Dendritic cell treated with granulocyte-macrophage colony-stimulating factor and Interleukin-4, amounts not matched to agents 40 ng/mL and 50 ng/mL, for 4 days (primary cell): ENCODE measurements at regions of chr19 and their contacts with region 1.

Region 1: GRCh38 chr19:37779127-37780005 is at the start of gene ZNF573:
- H3K4me3 Mint-ChIP-seq: peak within 1 kb of the TSS; percentile 90
- H3K27ac Mint-ChIP-seq: peak within 1 kb of the TSS; percentile 93
- H3K4me1 Mint-ChIP-seq: peaks cover 23% of the 10 kb centered on the region
- H3K27me3 Mint-ChIP-seq: no peaks in the 10 kb centered on the region

Region 2: GRCh38 chr19:36214386-36215275 is 1564.7 kb before region 1 on chr19 and contains the starts of genes ZNF146 and ZNF565:
- intact Hi-C with region 1: loop called (anchors 10 kb)
- H3K4me3 Mint-ChIP-seq: no peak within 1 kb of the TSS
- H3K27ac Mint-ChIP-seq: no peak within 1 kb of the TSS
- H3K4me1 Mint-ChIP-seq: peaks cover 7% of the 10 kb centered on the region
- H3K27me3 Mint-ChIP-seq: no peaks in the 10 kb centered on the region

Region 3: DNA sequence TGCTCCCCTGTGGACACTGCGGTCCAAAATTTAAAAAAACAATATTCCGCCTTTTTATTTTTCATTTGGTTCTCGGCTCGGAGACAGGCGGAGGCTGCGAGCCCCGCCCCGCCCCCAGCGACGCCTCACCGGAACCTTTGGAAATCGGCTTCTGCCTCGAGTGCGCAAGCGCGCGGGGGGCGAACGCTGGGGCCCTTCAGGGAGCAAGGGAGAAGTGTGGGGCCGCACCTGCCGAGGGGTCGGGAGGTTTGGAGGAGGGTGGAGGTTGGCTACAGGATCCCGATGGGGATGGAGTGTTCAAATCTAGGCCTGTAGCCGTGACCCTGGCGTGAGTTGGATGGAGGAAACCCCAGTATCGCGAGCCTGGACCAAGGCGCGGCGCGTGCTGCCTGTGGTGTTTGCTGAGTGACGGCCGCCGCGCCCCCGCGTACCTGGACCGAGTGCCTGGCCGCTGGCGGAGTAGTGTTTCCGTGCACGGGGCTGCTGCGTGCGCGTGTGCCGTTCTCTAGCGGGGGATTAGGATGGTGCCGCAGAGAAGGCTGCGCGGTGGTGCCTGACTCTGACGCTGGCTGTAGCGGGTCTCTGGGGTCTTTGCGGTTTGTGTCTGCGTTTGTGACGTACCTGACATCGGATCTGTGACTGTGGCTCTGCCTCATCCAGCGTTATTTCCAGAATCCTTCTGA is 123.5 kb before region 1 on chr19:
- intact Hi-C with region 1: loop called (anchors 10 kb)
- H3K4me3 Mint-ChIP-seq: peak overlapping the region; percentile 90
- H3K27ac Mint-ChIP-seq: peak overlapping the region; percentile 85
- H3K4me1 Mint-ChIP-seq: peaks cover 22% of the 10 kb centered on the region
- H3K27me3 Mint-ChIP-seq: peaks cover 5% of the 10 kb centered on the region

Region 4: DNA sequence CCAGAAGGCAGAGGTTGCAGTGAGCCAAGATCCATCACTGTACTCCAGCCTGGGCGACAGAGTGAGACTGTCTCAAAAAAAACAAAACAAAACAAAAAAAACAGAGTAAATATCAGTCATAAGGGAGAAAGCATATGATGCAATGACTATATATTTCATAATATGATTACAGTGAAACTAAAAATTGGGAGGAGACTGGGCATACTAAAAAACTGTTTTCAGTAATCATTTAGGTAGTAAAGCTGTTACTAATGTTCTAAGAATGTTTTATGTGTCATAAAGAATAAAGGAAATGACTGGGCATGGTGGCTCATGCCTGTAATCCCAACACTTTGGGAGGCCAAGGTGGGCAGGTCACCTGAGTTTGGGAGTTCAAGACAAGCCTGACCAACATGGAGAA is 15.9 kb before region 1 on chr19:
- intact Hi-C with region 1: no loop called
- H3K4me3 Mint-ChIP-seq: no peak overlapping the region
- H3K27ac Mint-ChIP-seq: no peak overlapping the region
- H3K4me1 Mint-ChIP-seq: no peaks in the 10 kb centered on the region
- H3K27me3 Mint-ChIP-seq: no peaks in the 10 kb centered on the region